ENCODE measurements at regions of chr13 and their contacts with region 1.

Region 1: DNA sequence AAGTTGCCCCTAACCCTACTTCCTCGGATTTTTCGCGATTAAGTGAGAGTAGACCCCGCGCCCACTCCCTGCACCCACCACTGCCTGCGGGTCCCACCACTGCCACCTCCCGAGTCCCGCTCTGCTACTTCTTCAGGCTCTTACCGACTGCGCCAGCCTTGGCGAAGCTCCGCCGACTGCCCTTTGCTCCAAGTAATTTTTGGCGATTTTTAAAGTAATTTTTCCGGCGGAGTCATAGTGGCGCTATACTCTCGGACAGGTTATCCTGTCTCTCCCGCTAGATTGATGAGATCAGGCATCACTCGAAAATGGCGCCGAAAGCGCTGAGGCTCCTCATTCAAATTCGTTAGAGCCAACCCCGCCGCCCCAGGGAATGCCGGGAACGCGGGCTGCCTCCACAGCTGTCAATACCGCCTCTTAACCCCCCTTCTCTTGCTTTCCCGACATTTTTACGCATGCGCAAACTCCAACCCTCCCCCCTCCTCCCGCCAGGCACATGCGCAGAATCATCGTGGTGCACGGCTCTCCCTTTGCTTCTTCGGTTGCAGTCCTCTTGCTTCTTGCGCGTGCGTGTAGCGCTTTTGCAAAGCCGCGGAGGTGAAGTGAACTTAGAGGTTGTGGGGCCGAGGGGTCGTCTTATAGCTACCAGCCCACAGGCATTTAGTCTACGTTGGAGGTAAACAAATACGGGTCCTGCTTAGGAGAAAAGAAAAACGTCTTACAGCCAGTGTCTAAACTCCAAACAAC is 66.6 kb downstream of the KCNRG start:
- DNase-seq: peak; percentile 99
- H3K4me3 ChIP-seq: peak overlapping the region; percentile 62 to 86 (median 83)
- H3K27ac ChIP-seq: peak overlapping the region; percentile 91 to 96 (median 94)
- H3K4me1 ChIP-seq: peaks cover 5 to 65% (median 24%) of the 10 kb centered on the region in 4 donors
- H3K27me3 ChIP-seq: no peaks in the 10 kb centered on the region
- CTCF ChIP-seq: peak in 2 of 5 experiments; percentile 7 to 33
- EP300 ChIP-seq: no peak
- POLR2A ChIP-seq: peak; percentile 62

Region 2: DNA sequence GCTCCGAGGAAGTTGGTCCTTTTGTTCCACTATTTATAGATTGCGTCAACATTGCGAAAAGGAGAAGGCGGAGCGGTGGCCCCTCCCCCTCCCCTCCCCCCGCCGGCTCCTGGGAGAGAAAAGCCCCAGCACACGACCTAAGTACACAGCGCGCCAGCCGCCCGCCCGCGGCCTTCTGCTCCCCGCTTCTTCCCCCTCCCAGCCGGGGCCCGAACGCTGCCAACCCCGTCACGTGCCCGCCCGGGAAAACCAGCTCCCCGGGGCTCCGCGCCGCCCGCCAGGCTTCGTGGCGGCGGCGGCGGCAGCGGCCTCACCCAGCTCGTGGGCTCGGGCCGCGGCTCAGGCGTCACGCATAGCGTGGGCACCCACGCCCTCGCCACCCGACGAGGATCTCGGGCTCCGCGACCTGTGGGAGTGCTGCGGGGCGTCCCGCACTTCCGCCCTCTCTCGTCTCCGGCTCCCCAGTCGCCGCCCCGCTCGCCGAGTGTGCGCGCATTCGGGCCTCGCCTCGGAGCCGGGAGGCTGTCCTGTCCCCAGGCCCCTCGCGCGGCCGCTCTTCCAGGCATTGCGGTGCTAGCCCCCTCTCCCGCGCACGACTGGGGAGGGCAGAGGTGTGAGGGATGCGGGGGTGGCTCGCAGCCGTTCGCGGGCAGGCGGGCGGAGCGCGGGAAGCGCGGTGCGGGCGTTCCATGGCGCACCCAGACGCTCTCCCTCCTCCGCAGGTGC is 43.8 kb after region 1 on chr13:
- in situ Hi-C with region 1: no loop called
- intact Hi-C with region 1: loop called (anchors 2 kb)
- DNase-seq: peak; percentile 96
- H3K4me3 ChIP-seq: peak overlapping the region; percentile 64 to 88 (median 78)
- H3K27ac ChIP-seq: peak overlapping the region; percentile 95 to 100 (median 98)
- H3K4me1 ChIP-seq: peaks cover 26 to 53% (median 42%) of the 10 kb centered on the region in 4 donors
- H3K27me3 ChIP-seq: peaks cover 31% of the 10 kb centered on the region
- CTCF ChIP-seq: no peak
- EP300 ChIP-seq: no peak
- POLR2A ChIP-seq: peak; percentile 90

Region 3: GRCh38 chr13:50529154-50529882 is 447.5 kb after region 1 on chr13:
- in situ Hi-C with region 1: loop called in 1 of 4 experiments (anchors 25 kb)
- intact Hi-C with region 1: no loop called
- DNase-seq: peak; percentile 84
- H3K4me3 ChIP-seq: no peak overlapping the region
- H3K27ac ChIP-seq: peak overlapping the region; percentile 52 to 76 (median 64)
- H3K4me1 ChIP-seq: peaks cover 20 to 43% (median 21%) of the 10 kb centered on the region in 4 donors
- H3K27me3 ChIP-seq: no peaks in the 10 kb centered on the region
- CTCF ChIP-seq: no peak
- EP300 ChIP-seq: no peak
- POLR2A ChIP-seq: no peak

Region 4: GRCh38 chr13:51785712-51786424 is 1704.0 kb after region 1 on chr13:
- in situ Hi-C with region 1: no loop called
- intact Hi-C with region 1: loop called (anchors 5 kb)
- DNase-seq: no peak
- H3K4me3 ChIP-seq: no peak overlapping the region
- H3K27ac ChIP-seq: peak overlapping the region in 2 of 4 donors; percentile 15 to 33
- H3K4me1 ChIP-seq: peaks cover 0 to 34% (median 8%) of the 10 kb centered on the region in 4 donors
- H3K27me3 ChIP-seq: no peaks in the 10 kb centered on the region
- CTCF ChIP-seq: no peak
- EP300 ChIP-seq: no peak
- POLR2A ChIP-seq: no peak

Measured in transverse colon (tissue), 4 donors.